Lower leg skin (tissue), 4 donors: ENCODE measurements at regions of chr16 and their contacts with region 1.

Region 1: DNA sequence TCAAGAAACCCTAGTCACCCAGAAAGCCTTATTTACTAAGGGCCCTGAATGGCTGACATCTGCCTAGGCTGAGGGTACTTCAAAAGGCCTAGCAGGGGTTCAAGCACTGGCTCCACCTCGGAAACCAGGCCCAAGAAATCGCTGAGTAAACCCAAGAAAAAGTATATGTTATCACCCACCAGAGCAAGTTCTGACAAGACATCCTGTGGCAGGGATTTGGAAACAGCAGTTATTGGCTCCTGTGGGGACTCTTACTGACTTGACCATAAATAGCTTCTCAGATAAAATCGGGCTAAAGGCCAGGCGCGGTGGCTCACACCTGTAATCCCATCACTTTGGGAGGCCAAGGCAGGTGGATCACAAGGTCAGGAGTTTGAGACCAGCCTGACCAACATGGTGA is 12.2 kb downstream of the ATP6V0D1 start:
- DNase-seq: no peak
- H3K4me3 ChIP-seq: no peak overlapping the region
- CTCF ChIP-seq: no peak
- POLR2A ChIP-seq: no peak

Region 2: GRCh38 chr16:67279296-67280089 is 189.2 kb before region 1 on chr16 and contains the start of gene PLEKHG4:
- intact Hi-C with region 1: loop called (anchors 5 kb)
- DNase-seq: peak; percentile 60 to 94
- H3K4me3 ChIP-seq: peak within 1 kb of the TSS; percentile 51
- CTCF ChIP-seq: no peak
- POLR2A ChIP-seq: no peak
- total RNA-seq, gene PLEKHG4: 16.6 to 28.0 (median 21.2) TPM

Region 3: GRCh38 chr16:67428146-67428731 is 40.5 kb before region 1 on chr16:
- intact Hi-C with region 1: loop called (anchors 5 kb)
- DNase-seq: peak in 1 of 2 donors; percentile 91
- H3K4me3 ChIP-seq: no peak overlapping the region
- CTCF ChIP-seq: peak in 1 of 3 donors; percentile 67
- POLR2A ChIP-seq: no peak